ENCODE measurements at regions of chr5 and their contacts with region 1.

Region 1: GRCh38 chr5:76818844-76819831 is at the start of gene F2RL1:
- H3K4me3 ChIP-seq: peak within 1 kb of the TSS; percentile 65
- H3K27ac ChIP-seq: peak within 1 kb of the TSS; percentile 88
- H3K4me1 ChIP-seq: peaks cover 4% of the 10 kb centered on the region
- CTCF ChIP-seq: no peak

Region 2: DNA sequence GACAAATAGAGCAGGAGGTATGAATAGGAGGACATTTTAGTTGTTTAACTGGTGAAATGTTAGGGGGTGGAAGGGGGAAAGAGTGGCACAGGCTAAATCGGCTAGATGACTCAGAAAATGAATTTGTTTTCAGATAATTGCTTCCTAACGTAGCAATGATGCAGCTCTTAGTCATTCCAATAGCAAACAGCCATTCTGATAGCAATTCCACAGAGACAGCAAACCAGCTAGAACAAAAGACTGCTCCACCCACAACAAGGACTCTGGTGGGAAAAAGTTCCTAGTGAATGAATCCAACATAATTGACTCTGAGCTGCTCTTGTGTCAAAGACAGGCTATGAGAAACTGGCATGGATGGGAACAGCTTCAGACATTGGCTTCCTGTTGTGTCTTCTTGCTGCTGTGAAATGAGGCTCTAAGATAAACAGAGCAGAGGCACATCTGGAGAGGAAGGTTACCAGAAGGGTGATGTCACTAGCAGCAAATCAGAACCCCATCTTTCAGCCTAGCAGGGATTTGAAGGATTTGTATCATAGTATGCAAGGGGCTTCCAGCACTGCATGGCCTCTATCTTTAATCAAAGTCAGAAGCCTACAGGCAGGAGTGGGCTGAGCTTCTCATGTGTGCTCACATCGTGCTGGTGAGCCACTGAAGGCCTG is 28.4 kb before region 1 on chr5:
- CTCF ChIA-PET with region 1: interaction called, 4 read pairs
- POLR2A ChIA-PET with region 1: interaction called, 24 read pairs
- H3K4me3 ChIP-seq: no peak overlapping the region
- H3K27ac ChIP-seq: peak overlapping the region; percentile 79
- H3K4me1 ChIP-seq: peaks cover 19% of the 10 kb centered on the region
- CTCF ChIP-seq: no peak

Region 3: GRCh38 chr5:76805850-76806505 is 13.2 kb before region 1 on chr5:
- CTCF ChIA-PET with region 1: interaction called, 22 read pairs
- POLR2A ChIA-PET with region 1: interaction called, 35 read pairs
- H3K4me3 ChIP-seq: no peak overlapping the region
- H3K27ac ChIP-seq: no peak overlapping the region; the same call in 1 of the 2 replicates
- H3K4me1 ChIP-seq: peaks cover 2% of the 10 kb centered on the region
- CTCF ChIP-seq: no peak

Measured in HEK293 (cell line).